Ascending aorta (tissue), 2 donors: ENCODE measurements at regions of chr3 and their contacts with region 1.

Region 1: DNA sequence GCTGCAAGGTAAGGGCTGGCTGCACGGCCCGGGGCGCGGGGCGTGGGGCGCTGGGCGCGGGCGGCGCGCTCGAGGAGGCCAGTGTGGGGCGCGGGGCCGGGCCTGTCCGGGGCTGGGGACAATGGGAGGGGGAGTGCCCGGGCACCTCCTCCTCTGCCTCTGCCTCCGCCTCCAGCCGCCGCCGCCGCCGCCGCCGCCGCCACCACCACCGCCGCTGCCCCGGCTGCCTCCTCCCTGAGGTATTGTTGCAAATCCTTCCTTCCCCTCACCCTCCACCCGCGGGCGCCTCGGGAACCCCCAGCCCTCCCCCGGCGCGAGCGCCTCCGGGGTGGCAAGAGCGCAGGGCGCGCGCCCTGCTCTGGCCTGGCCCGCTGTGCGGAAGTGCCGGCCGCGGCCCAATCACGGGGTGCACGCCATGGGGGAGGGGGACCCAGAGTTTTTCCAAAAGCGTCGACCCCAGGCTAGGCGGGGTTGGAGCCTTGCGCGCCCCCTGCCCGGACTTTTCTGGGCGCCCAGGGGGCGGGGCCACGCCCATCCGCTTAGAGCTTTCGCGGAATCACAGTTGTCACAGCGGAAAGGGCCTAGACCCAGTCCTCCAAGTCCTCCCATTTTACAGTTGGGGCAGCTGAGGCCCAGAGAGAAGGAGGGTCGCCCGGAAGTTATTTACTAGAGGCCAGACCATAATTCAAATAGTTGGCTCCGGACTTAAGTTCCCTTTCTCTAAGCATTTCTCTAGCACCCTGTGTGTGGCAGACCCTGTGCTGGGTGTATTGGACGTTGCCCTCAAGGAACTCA is at the start of gene LPP:
- DNase-seq: peak in 1 of 2 donors; percentile 91
- H3K4me3 ChIP-seq: peak within 1 kb of the TSS; percentile 81 to 89
- H3K27ac ChIP-seq: peak within 1 kb of the TSS; percentile 98 to 99
- H3K4me1 ChIP-seq: peaks cover 0 to 31% of the 10 kb centered on the region in 2 donors
- H3K27me3 ChIP-seq: no peaks in the 10 kb centered on the region
- CTCF ChIP-seq: no peak
- total RNA-seq, gene LPP: 1,791 TPM

Region 2: GRCh38 chr3:188052169-188053030 is 101.8 kb before region 1 on chr3:
- intact Hi-C with region 1: loop called (anchors 2 kb)
- DNase-seq: peak; percentile 86 to 96
- H3K4me3 ChIP-seq: peak overlapping the region; percentile 22 to 47
- H3K27ac ChIP-seq: peak overlapping the region; percentile 88 to 93
- H3K4me1 ChIP-seq: peaks cover 8 to 31% of the 10 kb centered on the region in 2 donors
- H3K27me3 ChIP-seq: no peaks in the 10 kb centered on the region
- CTCF ChIP-seq: peak; percentile 66 to 82 (median 74)

Region 3: DNA sequence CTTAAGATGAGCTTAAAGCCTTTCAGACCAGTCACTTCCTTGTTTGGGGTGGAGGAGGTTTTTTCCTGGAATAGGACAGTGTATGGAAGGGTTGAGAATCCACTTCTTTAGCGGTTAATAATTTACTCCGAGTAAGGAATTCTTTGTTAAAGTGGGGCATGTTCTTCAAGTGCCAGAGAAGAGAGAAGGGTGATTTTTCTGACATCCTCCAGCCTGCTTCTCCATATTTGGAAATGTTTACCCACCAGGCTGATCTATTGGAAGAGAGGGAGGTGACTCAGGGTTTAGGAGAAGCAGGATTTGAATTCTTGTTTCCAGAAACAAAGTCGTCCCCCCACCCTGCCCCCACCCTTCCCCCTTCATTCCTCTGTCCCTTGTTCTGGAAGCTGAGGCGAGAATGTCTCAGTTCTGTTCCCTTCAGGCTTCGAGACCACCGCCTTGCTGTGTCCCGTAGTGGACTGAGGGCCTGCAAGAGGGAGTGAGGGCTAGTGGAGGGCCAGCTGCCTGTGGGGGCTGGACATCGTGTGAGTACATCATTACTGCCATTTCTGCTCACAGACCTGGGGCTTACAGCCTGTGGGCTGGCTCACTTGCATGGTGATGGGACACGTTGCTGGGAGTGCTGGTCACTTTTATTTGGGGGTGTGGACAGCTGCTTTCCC is 58.2 kb after region 1 on chr3:
- intact Hi-C with region 1: loop called (anchors 2 kb)
- DNase-seq: peak in 1 of 2 donors; percentile 82
- H3K4me3 ChIP-seq: peak overlapping the region; percentile 49 to 63
- H3K27ac ChIP-seq: peak overlapping the region; percentile 92 to 96
- H3K4me1 ChIP-seq: peaks cover 17 to 33% of the 10 kb centered on the region in 2 donors
- H3K27me3 ChIP-seq: no peaks in the 10 kb centered on the region
- CTCF ChIP-seq: no peak

Region 4: GRCh38 chr3:188262913-188263683 is 108.9 kb after region 1 on chr3:
- intact Hi-C with region 1: loop called (anchors 2 kb)
- DNase-seq: peak in 1 of 2 donors; percentile 91
- H3K4me3 ChIP-seq: no peak overlapping the region
- H3K27ac ChIP-seq: peak overlapping the region; percentile 94 to 99
- H3K4me1 ChIP-seq: peaks cover 24 to 67% of the 10 kb centered on the region in 2 donors
- H3K27me3 ChIP-seq: no peaks in the 10 kb centered on the region
- CTCF ChIP-seq: no peak

Region 5: GRCh38 chr3:188947401-188948280 is 793.4 kb after region 1 on chr3:
- intact Hi-C with region 1: loop called (anchors 1 kb)
- DNase-seq: peak; percentile 76 to 99
- H3K4me3 ChIP-seq: peak overlapping the region; percentile 57 to 64
- H3K27ac ChIP-seq: peak overlapping the region; percentile 98 to 99
- H3K4me1 ChIP-seq: peaks cover 32 to 74% of the 10 kb centered on the region in 2 donors
- H3K27me3 ChIP-seq: no peaks in the 10 kb centered on the region
- CTCF ChIP-seq: peak; percentile 30 to 45 (median 44)